ENCODE measurements at regions of chr7 and their contacts with region 1.

Region 1: DNA sequence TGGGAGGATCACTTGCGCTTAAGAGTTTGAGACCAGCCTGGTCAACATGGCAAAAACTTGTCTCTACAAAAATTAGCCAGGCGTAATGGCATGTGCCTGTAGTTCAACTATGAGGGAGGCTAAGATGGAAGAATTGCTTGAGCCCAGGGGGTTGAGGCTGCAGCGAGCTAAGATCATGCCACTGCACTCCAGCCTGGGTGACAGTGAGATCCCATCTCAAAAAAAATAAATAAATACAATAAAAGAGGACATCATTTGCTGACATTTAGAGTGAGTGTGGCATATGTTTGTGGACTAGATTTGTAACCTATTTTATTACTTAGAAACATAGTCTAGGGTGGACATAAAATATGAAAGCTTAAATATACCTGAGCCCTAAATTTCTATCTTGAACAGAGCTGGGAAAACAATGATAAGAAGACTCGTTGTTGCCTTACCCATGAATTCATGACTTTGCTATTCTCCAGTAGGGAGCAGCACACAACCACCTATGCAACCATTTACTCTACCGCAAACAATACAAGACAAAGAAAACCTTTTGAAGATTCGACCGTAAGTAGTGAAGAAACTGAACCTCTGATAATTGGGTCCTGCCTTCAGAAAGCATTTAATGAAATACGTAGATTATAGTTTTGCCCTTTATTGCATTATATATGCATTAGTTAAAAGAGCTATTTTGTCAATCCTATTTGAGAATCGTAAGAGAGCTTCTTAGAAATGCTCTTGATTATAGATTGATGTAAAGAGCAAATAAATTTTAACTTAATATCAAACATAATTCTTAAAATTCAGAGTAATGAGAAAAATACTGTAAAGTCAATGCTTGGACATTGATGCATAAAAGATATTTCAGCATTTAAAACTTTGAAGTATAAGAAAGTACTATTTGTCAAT is 83.5 kb downstream of the GNAT3 start:
- DNase-seq: peak; percentile 65
- ATAC-seq: peak; percentile 90
- H3K4me3 ChIP-seq: no peak overlapping the region
- H3K27ac ChIP-seq: no peak overlapping the region
- H3K4me1 ChIP-seq: no peaks in the 10 kb centered on the region
- H3K27me3 ChIP-seq: no peaks in the 10 kb centered on the region
- CTCF ChIP-seq: peak; percentile 81
- EP300 ChIP-seq: no peak
- POLR2A ChIP-seq: no peak
- RAD21 ChIP-seq: peak; percentile 82

Region 2: GRCh38 chr7:80453699-80454340 is 25.4 kb after region 1 on chr7:
- CTCF ChIA-PET with region 1: interaction called, 11 read pairs
- POLR2A ChIA-PET with region 1: no interaction called
- in situ Hi-C with region 1: no loop called
- intact Hi-C with region 1: loop called (anchors 1 kb)
- DNase-seq: peak; percentile 12
- ATAC-seq: no peak
- H3K4me3 ChIP-seq: no peak overlapping the region
- H3K27ac ChIP-seq: no peak overlapping the region
- H3K4me1 ChIP-seq: peaks cover 24% of the 10 kb centered on the region
- H3K27me3 ChIP-seq: no peaks in the 10 kb centered on the region
- CTCF ChIP-seq: peak; percentile 55
- EP300 ChIP-seq: no peak
- POLR2A ChIP-seq: no peak
- RAD21 ChIP-seq: no peak

Region 3: DNA sequence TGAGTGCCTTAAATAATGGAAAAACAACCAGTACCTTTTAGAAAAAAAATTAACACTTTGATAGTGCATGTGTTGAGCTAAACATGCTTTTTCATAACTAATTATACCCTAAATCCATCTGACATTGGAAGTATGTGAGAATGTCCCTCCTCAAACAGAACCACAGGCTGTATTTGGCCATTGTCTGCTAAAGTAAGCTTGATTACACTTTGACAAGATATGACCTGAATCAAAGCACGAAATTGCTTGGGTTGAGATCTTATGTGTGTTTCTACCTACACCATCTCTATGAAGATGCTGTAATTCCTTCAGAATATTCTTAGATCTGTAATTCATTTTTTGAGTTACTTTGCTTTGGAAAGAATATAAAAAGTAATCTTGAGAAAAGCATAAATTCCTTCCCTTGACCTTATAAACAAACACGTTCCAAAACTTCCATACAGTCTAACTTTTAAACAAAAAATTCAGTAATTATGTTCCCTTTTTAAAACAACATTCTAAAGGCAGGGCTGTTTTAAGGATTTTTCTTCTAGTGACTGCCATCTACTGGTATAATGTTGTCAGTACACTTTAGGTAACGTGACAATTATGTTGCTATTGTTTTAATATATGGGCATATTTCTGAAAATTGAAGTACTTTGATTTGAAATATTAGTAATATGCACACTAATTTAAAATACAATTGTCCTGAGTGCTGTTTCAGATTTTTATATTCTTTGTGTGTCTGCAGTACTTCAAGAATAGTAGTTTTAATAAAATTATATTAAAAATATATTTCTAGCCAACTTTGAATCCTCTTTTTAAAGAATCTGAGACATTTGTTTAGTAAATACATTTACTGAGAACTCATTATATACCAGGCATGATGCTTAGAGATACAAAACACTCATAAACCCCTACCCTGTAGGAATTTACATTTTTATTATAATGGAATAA is 231.0 kb after region 1 on chr7:
- CTCF ChIA-PET with region 1: interaction called, 25 read pairs
- POLR2A ChIA-PET with region 1: no interaction called
- in situ Hi-C with region 1: loop called (anchors 5 kb)
- intact Hi-C with region 1: loop called (anchors 1 kb)
- DNase-seq: peak; percentile 26
- ATAC-seq: no peak; the same call in 2 of the 3 replicates
- H3K4me3 ChIP-seq: no peak overlapping the region
- H3K27ac ChIP-seq: no peak overlapping the region
- H3K4me1 ChIP-seq: peaks cover 22% of the 10 kb centered on the region
- H3K27me3 ChIP-seq: no peaks in the 10 kb centered on the region
- CTCF ChIP-seq: peak; percentile 60
- EP300 ChIP-seq: no peak
- POLR2A ChIP-seq: no peak
- RAD21 ChIP-seq: no peak

Region 4: DNA sequence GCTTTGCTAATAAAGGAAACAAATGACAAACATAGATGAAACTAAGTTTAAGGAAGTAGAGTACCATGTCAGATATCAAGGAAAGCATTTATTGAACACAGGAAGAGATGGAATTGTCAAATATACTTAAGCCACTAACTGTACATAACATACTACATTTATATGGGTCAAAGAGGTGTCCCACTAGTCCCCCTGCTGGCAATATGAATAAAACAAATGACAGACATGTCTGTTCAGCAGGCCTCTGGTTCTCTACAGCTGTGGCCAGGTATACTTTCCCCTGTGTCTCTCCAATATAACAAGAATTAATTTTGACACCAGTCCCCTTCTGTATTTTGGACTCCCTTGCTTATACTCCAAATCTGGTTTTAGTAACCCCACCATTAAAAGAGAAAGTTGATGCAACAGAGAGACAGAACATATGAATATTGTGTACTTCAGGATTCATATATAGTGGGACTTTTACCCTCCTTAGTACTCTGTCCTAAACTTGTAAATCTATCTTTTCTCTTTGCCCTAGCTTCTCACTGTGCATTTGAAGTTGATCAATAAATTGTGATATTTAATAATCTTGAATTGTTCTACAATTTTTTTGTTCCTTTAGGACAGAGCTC is 253.0 kb after region 1 on chr7:
- CTCF ChIA-PET with region 1: interaction called, 10 read pairs
- POLR2A ChIA-PET with region 1: no interaction called
- in situ Hi-C with region 1: no loop called
- intact Hi-C with region 1: loop called (anchors 1 kb)
- DNase-seq: peak; percentile 43
- ATAC-seq: peak; percentile 89
- H3K4me3 ChIP-seq: no peak overlapping the region
- H3K27ac ChIP-seq: no peak overlapping the region
- H3K4me1 ChIP-seq: peaks cover 37% of the 10 kb centered on the region
- H3K27me3 ChIP-seq: no peaks in the 10 kb centered on the region
- CTCF ChIP-seq: peak; percentile 61
- EP300 ChIP-seq: no peak
- POLR2A ChIP-seq: no peak
- RAD21 ChIP-seq: no peak

Region 5: GRCh38 chr7:81469869-81470723 is 1041.7 kb after region 1 on chr7:
- CTCF ChIA-PET with region 1: no interaction called
- POLR2A ChIA-PET with region 1: no interaction called
- in situ Hi-C with region 1: loop called (anchors 25 kb)
- intact Hi-C with region 1: loop called (anchors 10 kb)
- DNase-seq: peak; percentile 42
- ATAC-seq: peak; percentile 92
- H3K4me3 ChIP-seq: no peak overlapping the region
- H3K27ac ChIP-seq: no peak overlapping the region
- H3K4me1 ChIP-seq: peaks cover 7% of the 10 kb centered on the region; the same call in 1 of the 2 replicates
- H3K27me3 ChIP-seq: no peaks in the 10 kb centered on the region
- CTCF ChIP-seq: peak; percentile 84
- EP300 ChIP-seq: no peak
- POLR2A ChIP-seq: no peak
- RAD21 ChIP-seq: peak; percentile 41